Posterior cingulate gyrus (tissue), 11 donors: ENCODE measurements at regions of chr12 and their contacts with region 1.

Region 1: GRCh38 chr12:62934799-62935674 is at the start of gene PPM1H:
- DNase-seq: peak; percentile 67 to 97 (median 74)

Region 2: GRCh38 chr12:62466594-62467491 is 468.2 kb before region 1 on chr12 and contains the start of gene MON2:
- intact Hi-C with region 1: loop called (anchors 10 kb)
- DNase-seq: peak; percentile 82 to 98 (median 88)

Region 3: GRCh38 chr12:62603061-62603810 is 331.8 kb before region 1 on chr12:
- intact Hi-C with region 1: loop called (anchors 10 kb)
- DNase-seq: peak; percentile 76 to 99 (median 88)

Region 4: GRCh38 chr12:62813031-62813829 is 121.8 kb before region 1 on chr12:
- intact Hi-C with region 1: loop called (anchors 2 kb)
- DNase-seq: peak; percentile 40 to 94 (median 67)

Region 5: DNA sequence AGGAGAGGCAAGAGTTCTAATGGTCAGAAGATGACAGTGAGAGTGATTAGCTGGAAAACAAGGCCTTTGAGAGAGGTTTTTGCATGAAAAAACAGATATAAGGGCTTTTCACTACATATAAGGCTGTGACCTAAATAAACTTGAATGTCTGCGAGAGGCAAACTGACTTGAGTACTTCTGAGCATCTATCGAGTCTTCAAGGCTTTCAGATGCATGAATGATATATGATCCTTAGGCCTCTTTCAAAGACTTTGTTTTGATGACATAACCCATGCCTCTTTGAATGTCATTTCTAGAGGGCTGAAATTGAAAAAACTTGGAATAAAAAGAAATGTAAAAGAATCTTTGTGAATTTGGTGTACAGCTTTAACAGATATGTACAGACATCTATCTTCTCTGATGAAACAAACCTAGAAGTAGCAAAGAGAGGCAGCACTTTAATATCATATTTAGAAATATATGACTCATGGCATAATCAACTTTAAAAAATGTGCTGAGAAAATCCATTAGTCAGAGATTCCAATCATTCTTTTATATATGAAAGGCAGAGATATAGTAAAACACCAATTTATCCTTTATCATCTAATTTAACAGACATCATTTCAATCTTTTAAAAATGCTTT is 72.7 kb before region 1 on chr12:
- intact Hi-C with region 1: loop called (anchors 5 kb)
- DNase-seq: no peak